ENCODE measurements at regions of chr17 and their contacts with region 1.

Region 1: GRCh38 chr17:77325577-77326075 is 184.9 kb downstream of the SEC14L1 start:
- DNase-seq: no peak
- ATAC-seq: no peak
- H3K4me3 ChIP-seq: peak overlapping the region in 1 of 2 experiments; percentile 14; a peak in 2 of 4 replicates
- H3K27ac ChIP-seq: peak overlapping the region; percentile 99
- H3K4me1 ChIP-seq: peaks cover 86% of the 10 kb centered on the region
- H3K27me3 ChIP-seq: no peaks in the 10 kb centered on the region
- CTCF ChIP-seq: no peak

Region 2: GRCh38 chr17:77140166-77140878 is 185.3 kb before region 1 on chr17:
- CTCF ChIA-PET with region 1: no interaction called
- POLR2A ChIA-PET with region 1: no interaction called
- in situ Hi-C with region 1: no loop called
- intact Hi-C with region 1: no loop called
- DNase-seq: peak; percentile 62
- ATAC-seq: peak; percentile 92
- H3K4me3 ChIP-seq: peak overlapping the region; percentile 46 to 50
- H3K27ac ChIP-seq: peak overlapping the region; percentile 96
- H3K4me1 ChIP-seq: peaks cover 40% of the 10 kb centered on the region
- H3K27me3 ChIP-seq: no peaks in the 10 kb centered on the region
- CTCF ChIP-seq: no peak

Region 3: DNA sequence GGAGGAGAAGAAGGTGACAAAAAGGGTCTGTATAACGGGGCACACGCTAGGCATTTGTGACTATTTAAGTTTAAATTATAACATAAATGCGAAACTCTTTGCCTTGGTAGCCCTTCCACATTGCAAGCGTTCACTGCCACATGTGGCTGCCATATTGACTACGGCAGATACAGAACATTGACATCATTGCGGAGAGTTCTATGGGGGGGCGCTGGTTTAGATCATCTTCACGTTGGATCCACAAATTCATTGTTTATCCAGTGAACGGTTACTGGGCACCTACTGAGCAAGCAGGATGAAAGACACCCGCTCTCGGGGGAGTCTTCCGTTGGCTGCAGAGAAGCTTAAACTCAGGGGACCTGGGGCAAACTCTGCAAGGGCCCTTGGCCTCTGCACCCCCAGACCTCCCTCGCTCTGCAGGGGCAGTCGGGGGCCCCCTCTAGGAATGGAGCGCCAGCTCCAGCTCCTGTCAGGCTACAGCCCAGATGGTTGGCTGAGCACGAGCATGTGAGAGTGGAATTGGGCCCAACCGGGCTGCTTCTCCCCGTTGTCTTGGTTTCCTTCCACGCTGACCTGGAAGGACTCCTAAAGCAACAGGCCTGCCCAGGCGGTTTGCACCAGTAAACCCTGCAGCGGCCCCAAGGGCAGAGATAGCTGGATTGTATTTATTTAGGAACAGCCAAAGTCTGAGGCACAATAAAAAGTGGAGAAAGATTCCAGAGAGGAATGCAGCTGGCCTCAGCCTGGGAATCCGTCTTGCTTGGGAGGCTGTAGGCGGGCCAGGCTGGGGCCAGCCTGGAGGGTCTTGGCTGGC is 12.6 kb before region 1 on chr17:
- CTCF ChIA-PET with region 1: no interaction called
- POLR2A ChIA-PET with region 1: no interaction called
- in situ Hi-C with region 1: no loop called
- intact Hi-C with region 1: no loop called
- DNase-seq: no peak
- ATAC-seq: peak; percentile 47
- H3K4me3 ChIP-seq: no peak overlapping the region
- H3K27ac ChIP-seq: peak overlapping the region; percentile 99
- H3K4me1 ChIP-seq: peaks cover 94% of the 10 kb centered on the region
- H3K27me3 ChIP-seq: no peaks in the 10 kb centered on the region
- CTCF ChIP-seq: no peak

Region 4: GRCh38 chr17:77420804-77421629 is 95.4 kb after region 1 on chr17:
- CTCF ChIA-PET with region 1: no interaction called
- POLR2A ChIA-PET with region 1: no interaction called
- in situ Hi-C with region 1: loop called (anchors 5 kb)
- intact Hi-C with region 1: loop called (anchors 5 kb)
- DNase-seq: no peak
- ATAC-seq: no peak
- H3K4me3 ChIP-seq: no peak overlapping the region
- H3K27ac ChIP-seq: peak overlapping the region; percentile 83
- H3K4me1 ChIP-seq: peaks cover 97% of the 10 kb centered on the region
- H3K27me3 ChIP-seq: no peaks in the 10 kb centered on the region
- CTCF ChIP-seq: no peak

Measured in Panc1 (cell line).